ENCODE measurements at regions of chr20 and their contacts with region 1.

Region 1: GRCh38 chr20:9609887-9610502 is 95.6 kb downstream of the LAMP5 start:
- DNase-seq: no peak
- H3K4me3 Mint-ChIP-seq: no peak overlapping the region
- H3K27ac Mint-ChIP-seq: no peak overlapping the region
- H3K4me1 Mint-ChIP-seq: no peaks in the 10 kb centered on the region
- H3K27me3 Mint-ChIP-seq: no peaks in the 10 kb centered on the region

Region 2: GRCh38 chr20:9407805-9408421 is 202.1 kb before region 1 on chr20:
- intact Hi-C with region 1: loop called (anchors 1 kb)
- DNase-seq: peak; percentile 17
- H3K4me3 Mint-ChIP-seq: no peak overlapping the region
- H3K27ac Mint-ChIP-seq: no peak overlapping the region
- H3K4me1 Mint-ChIP-seq: no peaks in the 10 kb centered on the region
- H3K27me3 Mint-ChIP-seq: no peaks in the 10 kb centered on the region